CD8-positive, alpha-beta T cell (primary cell): ENCODE measurements at regions of chr9 and their contacts with region 1.

Region 1: GRCh38 chr9:3478549-3478953 is 47.2 kb downstream of the RFX3 start:
- DNase-seq: peak in 2 of 9 experiments; percentile 39 to 63
- ATAC-seq: no peak
- H3K4me3 ChIP-seq: no peak overlapping the region
- H3K4me3 Mint-ChIP-seq: peak overlapping the region; percentile 11
- H3K27ac ChIP-seq: peak overlapping the region in 1 of 2 experiments; percentile 79
- H3K27ac Mint-ChIP-seq: peak overlapping the region; percentile 60
- H3K4me1 ChIP-seq: peaks cover 9% of the 10 kb centered on the region
- H3K4me1 Mint-ChIP-seq: peaks cover 53% of the 10 kb centered on the region
- H3K27me3 ChIP-seq: no peaks in the 10 kb centered on the region
- H3K27me3 Mint-ChIP-seq: no peaks in the 10 kb centered on the region
- CTCF ChIP-seq: no peak

Region 2: GRCh38 chr9:3342159-3342777 is 136.3 kb before region 1 on chr9:
- CTCF ChIA-PET with region 1: no interaction called
- POLR2A ChIA-PET with region 1: no interaction called
- intact Hi-C with region 1: no loop called
- DNase-seq: no peak
- ATAC-seq: no peak
- H3K4me3 ChIP-seq: no peak overlapping the region
- H3K4me3 Mint-ChIP-seq: no peak overlapping the region
- H3K27ac ChIP-seq: no peak overlapping the region
- H3K27ac Mint-ChIP-seq: no peak overlapping the region
- H3K4me1 ChIP-seq: no peaks in the 10 kb centered on the region
- H3K4me1 Mint-ChIP-seq: peaks cover 5% of the 10 kb centered on the region
- H3K27me3 ChIP-seq: no peaks in the 10 kb centered on the region
- H3K27me3 Mint-ChIP-seq: no peaks in the 10 kb centered on the region
- CTCF ChIP-seq: no peak

Region 3: GRCh38 chr9:3398232-3398648 is 80.3 kb before region 1 on chr9:
- CTCF ChIA-PET with region 1: no interaction called
- POLR2A ChIA-PET with region 1: no interaction called
- intact Hi-C with region 1: loop called in 1 of 2 experiments (anchors 10 kb)
- DNase-seq: peak in 2 of 9 experiments; percentile 13 to 41
- ATAC-seq: peak; percentile 79
- H3K4me3 ChIP-seq: peak overlapping the region in 1 of 2 experiments; percentile 20
- H3K4me3 Mint-ChIP-seq: peak overlapping the region; percentile 73
- H3K27ac ChIP-seq: peak overlapping the region; percentile 25 to 28
- H3K27ac Mint-ChIP-seq: peak overlapping the region; percentile 95
- H3K4me1 ChIP-seq: peaks cover 12% of the 10 kb centered on the region
- H3K4me1 Mint-ChIP-seq: peaks cover 24% of the 10 kb centered on the region
- H3K27me3 ChIP-seq: no peaks in the 10 kb centered on the region
- H3K27me3 Mint-ChIP-seq: no peaks in the 10 kb centered on the region
- CTCF ChIP-seq: no peak

Region 4: GRCh38 chr9:3419893-3420292 is 58.7 kb before region 1 on chr9:
- CTCF ChIA-PET with region 1: no interaction called
- POLR2A ChIA-PET with region 1: no interaction called
- intact Hi-C with region 1: loop called in 1 of 2 experiments (anchors 10 kb)
- DNase-seq: no peak
- ATAC-seq: no peak
- H3K4me3 ChIP-seq: no peak overlapping the region
- H3K4me3 Mint-ChIP-seq: no peak overlapping the region
- H3K27ac ChIP-seq: no peak overlapping the region
- H3K27ac Mint-ChIP-seq: no peak overlapping the region
- H3K4me1 ChIP-seq: no peaks in the 10 kb centered on the region
- H3K4me1 Mint-ChIP-seq: peaks cover 3% of the 10 kb centered on the region
- H3K27me3 ChIP-seq: no peaks in the 10 kb centered on the region
- H3K27me3 Mint-ChIP-seq: no peaks in the 10 kb centered on the region
- CTCF ChIP-seq: no peak

Region 5: GRCh38 chr9:3492214-3492613 is 13.7 kb after region 1 on chr9:
- CTCF ChIA-PET with region 1: no interaction called
- POLR2A ChIA-PET with region 1: no interaction called
- intact Hi-C with region 1: loop called in 1 of 2 experiments (anchors 1 kb)
- DNase-seq: no peak
- ATAC-seq: no peak
- H3K4me3 ChIP-seq: no peak overlapping the region
- H3K4me3 Mint-ChIP-seq: no peak overlapping the region
- H3K27ac ChIP-seq: no peak overlapping the region
- H3K27ac Mint-ChIP-seq: no peak overlapping the region
- H3K4me1 ChIP-seq: no peaks in the 10 kb centered on the region
- H3K4me1 Mint-ChIP-seq: peaks cover 18% of the 10 kb centered on the region
- H3K27me3 ChIP-seq: no peaks in the 10 kb centered on the region
- H3K27me3 Mint-ChIP-seq: no peaks in the 10 kb centered on the region
- CTCF ChIP-seq: no peak